Mammary epithelial cell (primary cell): ENCODE measurements at regions of chr3 and their contacts with region 1.

Region 1: GRCh38 chr3:66483406-66483906 is 17.4 kb downstream of the LRIG1 start:
- DNase-seq: no peak
- H3K4me3 ChIP-seq: no peak overlapping the region
- H3K27ac ChIP-seq: no peak overlapping the region
- H3K4me1 ChIP-seq: no peaks in the 10 kb centered on the region
- H3K27me3 ChIP-seq: no peaks in the 10 kb centered on the region
- CTCF ChIP-seq: no peak

Region 2: GRCh38 chr3:66442254-66443117 is 41.0 kb before region 1 on chr3:
- CTCF ChIA-PET with region 1: no interaction called
- dilution Hi-C with region 1: loop called (anchors 5 kb)
- in situ Hi-C with region 1: no loop called
- intact Hi-C with region 1: no loop called
- DNase-seq: peak; percentile 41
- H3K4me3 ChIP-seq: no peak overlapping the region
- H3K27ac ChIP-seq: peak overlapping the region; percentile 33
- H3K4me1 ChIP-seq: peaks cover 37% of the 10 kb centered on the region
- H3K27me3 ChIP-seq: no peaks in the 10 kb centered on the region
- CTCF ChIP-seq: no peak

Region 3: GRCh38 chr3:66456711-66457173 is 26.7 kb before region 1 on chr3:
- CTCF ChIA-PET with region 1: no interaction called
- dilution Hi-C with region 1: no loop called
- in situ Hi-C with region 1: no loop called
- intact Hi-C with region 1: no loop called
- DNase-seq: no peak
- H3K4me3 ChIP-seq: no peak overlapping the region
- H3K27ac ChIP-seq: no peak overlapping the region
- H3K4me1 ChIP-seq: no peaks in the 10 kb centered on the region
- H3K27me3 ChIP-seq: no peaks in the 10 kb centered on the region
- CTCF ChIP-seq: no peak